ENCODE measurements at regions of chr5 and their contacts with region 1.

Region 1: GRCh38 chr5:52657247-52657645 is 130.5 kb upstream of the ITGA1 start:
- DNase-seq: no peak
- H3K4me3 ChIP-seq: no peak overlapping the region
- H3K27ac ChIP-seq: no peak overlapping the region
- H3K4me1 ChIP-seq: no peaks in the 10 kb centered on the region
- H3K27me3 ChIP-seq: no peaks in the 10 kb centered on the region
- CTCF ChIP-seq: peak in 2 of 3 donors; percentile 43 to 48
- POLR2A ChIP-seq: no peak

Region 2: GRCh38 chr5:50962934-50963872 is 1694.0 kb before region 1 on chr5:
- intact Hi-C with region 1: loop called (anchors 10 kb)
- DNase-seq: peak; percentile 40 to 78
- H3K4me3 ChIP-seq: peak overlapping the region; percentile 32 to 62 (median 48)
- H3K27ac ChIP-seq: no peak overlapping the region
- H3K4me1 ChIP-seq: peaks cover 0 to 6% of the 10 kb centered on the region in 2 donors
- H3K27me3 ChIP-seq: peaks cover 0 to 49% of the 10 kb centered on the region in 2 donors
- CTCF ChIP-seq: peak; percentile 68 to 89 (median 77)
- POLR2A ChIP-seq: no peak

Region 3: GRCh38 chr5:52674815-52675545 is 17.7 kb after region 1 on chr5:
- intact Hi-C with region 1: no loop called
- DNase-seq: no peak
- H3K4me3 ChIP-seq: peak overlapping the region in 1 of 3 donors; percentile 3
- H3K27ac ChIP-seq: peak overlapping the region; percentile 37 to 71
- H3K4me1 ChIP-seq: no peaks in the 10 kb centered on the region
- H3K27me3 ChIP-seq: no peaks in the 10 kb centered on the region
- CTCF ChIP-seq: no peak
- POLR2A ChIP-seq: no peak

Region 4: DNA sequence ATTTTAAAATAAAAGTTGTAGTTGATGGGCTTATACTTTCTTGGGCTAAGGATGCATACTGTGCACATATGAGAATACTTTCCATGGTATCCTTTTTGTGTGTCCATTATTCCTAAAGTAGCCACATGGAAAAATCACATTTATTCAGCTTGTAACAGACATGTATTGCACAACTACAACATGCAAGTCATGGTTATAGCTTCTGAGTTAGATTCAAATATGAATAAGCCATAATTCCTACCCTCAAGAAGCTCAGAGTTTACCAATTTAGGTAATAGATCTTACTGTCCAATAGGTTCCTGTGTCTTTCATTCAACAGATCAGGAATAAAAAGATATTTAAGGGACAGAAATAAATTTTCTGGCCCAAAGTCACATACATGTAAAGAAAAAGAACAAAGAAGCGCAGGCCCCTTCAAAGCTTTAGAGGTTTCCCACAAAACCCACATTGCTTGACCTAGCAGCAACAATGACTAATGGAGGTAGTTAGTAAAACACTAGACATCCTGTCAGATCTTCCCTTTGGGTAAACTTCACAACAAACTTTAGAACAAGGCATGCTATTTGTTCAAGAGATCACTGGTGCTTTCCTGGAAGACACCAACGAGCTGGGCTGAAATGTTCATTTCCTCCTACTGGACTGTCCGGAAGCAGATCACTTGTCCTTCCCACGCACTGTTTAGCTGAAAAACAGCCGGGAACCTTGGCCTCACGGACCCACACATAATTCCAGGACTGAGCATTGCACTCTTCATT is 52.1 kb after region 1 on chr5:
- intact Hi-C with region 1: no loop called
- DNase-seq: no peak
- H3K4me3 ChIP-seq: no peak overlapping the region
- H3K27ac ChIP-seq: peak overlapping the region; percentile 12 to 45
- H3K4me1 ChIP-seq: no peaks in the 10 kb centered on the region
- H3K27me3 ChIP-seq: no peaks in the 10 kb centered on the region
- CTCF ChIP-seq: no peak
- POLR2A ChIP-seq: no peak

Measured in breast epithelium (tissue), 4 donors.